A549 (cell line): ENCODE measurements at regions of chr16 and their contacts with region 1.

Region 1: DNA sequence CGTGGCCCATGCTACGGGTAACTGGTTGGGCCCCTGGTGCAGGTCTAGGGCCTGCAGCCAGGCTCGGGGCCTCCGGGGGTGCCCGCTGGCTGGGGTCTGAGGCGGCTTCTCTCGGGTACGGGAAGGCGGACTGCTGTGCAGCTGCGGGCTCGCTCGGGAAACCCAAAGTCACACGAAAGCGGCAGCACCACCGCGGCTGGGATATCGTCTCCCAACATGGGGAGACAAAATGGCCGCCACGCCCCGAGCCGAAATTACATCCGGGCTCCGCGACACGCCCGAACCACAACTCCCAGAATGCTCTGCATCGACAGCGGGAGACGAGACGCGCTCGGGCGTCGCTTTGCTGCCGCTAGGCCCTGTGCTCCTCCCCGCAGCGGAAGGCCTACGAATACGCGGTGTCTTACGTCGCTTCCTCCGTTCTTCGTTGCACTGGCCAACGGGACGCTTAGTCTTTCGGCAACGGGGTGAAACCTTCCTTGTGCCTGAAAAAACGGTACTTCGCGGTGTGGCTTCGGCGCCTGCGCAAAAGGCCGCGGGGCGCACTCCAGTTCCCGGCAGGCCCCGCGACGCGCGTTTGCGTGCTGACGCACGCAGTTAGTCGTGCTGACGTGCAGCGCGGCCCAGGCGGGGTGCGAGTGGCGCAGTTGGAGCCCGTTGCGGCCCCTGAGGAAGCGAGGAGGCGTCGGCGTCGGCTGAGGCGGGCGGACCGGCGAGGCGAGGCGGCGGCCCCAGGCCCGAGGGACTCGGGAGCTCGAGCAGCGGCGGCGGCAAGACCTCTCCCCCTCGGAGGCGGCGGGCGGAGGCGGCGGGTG is at the start of gene SRRM2:
- DNase-seq: peak; percentile 96 to 98
- ATAC-seq: peak; percentile 92
- H3K4me3 ChIP-seq: peak within 1 kb of the TSS; percentile 75
- H3K27ac ChIP-seq: peak within 1 kb of the TSS; percentile 98 to 100
- H3K4me1 ChIP-seq: peaks cover 33% of the 10 kb centered on the region
- CTCF ChIP-seq: no peak
- EP300 ChIP-seq: no peak
- POLR2A ChIP-seq: peak; percentile 70
- RAD21 ChIP-seq: no peak
- polyA plus RNA-seq, gene SRRM2: 167 and 231 TPM in 2 replicates

Region 2: GRCh38 chr16:2739625-2740435 is 12.4 kb before region 1 on chr16:
- CTCF ChIA-PET with region 1: interaction called, 12 read pairs
- POLR2A ChIA-PET with region 1: interaction called, 5 read pairs
- DNase-seq: no peak
- ATAC-seq: no peak; a peak in 1 of 6 replicates
- H3K4me3 ChIP-seq: no peak overlapping the region
- H3K27ac ChIP-seq: peak overlapping the region in 1 of 2 experiments; percentile 54; a peak in 4 of 6 replicates
- H3K4me1 ChIP-seq: no peaks in the 10 kb centered on the region
- CTCF ChIP-seq: no peak
- EP300 ChIP-seq: no peak
- POLR2A ChIP-seq: no peak
- RAD21 ChIP-seq: no peak